Transverse colon (tissue), 4 donors: ENCODE measurements at regions of chr6 and their contacts with region 1.

Region 1: DNA sequence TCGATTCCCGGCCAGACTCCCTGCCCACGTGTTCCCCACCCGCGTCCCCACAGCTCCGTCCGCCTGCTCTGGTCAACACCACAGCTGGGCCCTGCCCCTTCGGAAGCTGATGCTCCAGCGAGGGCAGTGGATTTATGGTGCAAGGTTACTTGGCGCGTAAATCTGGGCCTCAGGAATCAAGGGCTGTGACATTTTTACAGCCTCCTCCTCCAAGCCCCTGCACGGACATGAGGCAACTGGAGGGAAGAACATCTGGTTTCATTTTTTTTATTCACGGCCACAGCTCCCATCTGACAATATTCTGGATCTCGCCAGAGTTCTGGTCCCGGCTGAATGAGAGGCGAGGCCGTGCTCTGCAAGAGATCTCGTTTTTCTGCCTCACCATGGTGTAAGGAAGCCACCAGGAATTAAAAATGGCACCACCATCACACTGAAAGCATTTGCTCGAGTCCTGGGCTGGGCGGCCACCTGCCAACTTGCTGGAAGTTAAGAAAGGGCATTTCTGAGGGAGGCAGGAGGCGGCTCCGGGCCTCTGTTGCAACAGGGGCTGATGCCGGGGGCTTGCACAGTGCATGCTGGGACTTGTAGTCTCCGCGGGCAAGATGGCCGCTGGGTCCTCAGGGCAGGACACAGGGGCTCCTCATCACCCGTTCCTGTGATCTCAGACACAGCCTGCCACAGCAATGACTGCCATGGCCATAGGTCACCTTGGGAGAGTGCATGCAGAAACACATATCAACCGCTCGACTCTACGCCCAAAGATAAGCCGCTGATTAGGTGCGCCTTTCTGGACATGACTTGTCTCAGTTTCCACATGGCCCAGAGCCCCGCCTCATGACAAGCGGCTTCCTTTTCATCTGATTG is 148.5 kb downstream of the LY86 start:
- DNase-seq: peak; percentile 37
- H3K4me3 ChIP-seq: peak overlapping the region in 3 of 4 donors; percentile 8 to 27 (median 10)
- H3K27ac ChIP-seq: peak overlapping the region; percentile 8 to 66 (median 50)
- H3K4me1 ChIP-seq: peaks cover 0 to 5% (median 0%) of the 10 kb centered on the region in 4 donors
- H3K27me3 ChIP-seq: no peaks in the 10 kb centered on the region
- CTCF ChIP-seq: no peak
- EP300 ChIP-seq: no peak
- POLR2A ChIP-seq: no peak

Region 2: GRCh38 chr6:4994741-4995140 is 1742.3 kb before region 1 on chr6:
- in situ Hi-C with region 1: no loop called
- intact Hi-C with region 1: loop called (anchors 5 kb)
- DNase-seq: no peak
- H3K4me3 ChIP-seq: no peak overlapping the region
- H3K27ac ChIP-seq: no peak overlapping the region
- H3K4me1 ChIP-seq: no peaks in the 10 kb centered on the region
- H3K27me3 ChIP-seq: no peaks in the 10 kb centered on the region
- CTCF ChIP-seq: no peak
- EP300 ChIP-seq: no peak
- POLR2A ChIP-seq: no peak

Region 3: GRCh38 chr6:6610031-6610591 is 126.9 kb before region 1 on chr6:
- in situ Hi-C with region 1: no loop called
- intact Hi-C with region 1: no loop called
- DNase-seq: peak; percentile 11
- H3K4me3 ChIP-seq: no peak overlapping the region
- H3K27ac ChIP-seq: no peak overlapping the region
- H3K4me1 ChIP-seq: no peaks in the 10 kb centered on the region
- H3K27me3 ChIP-seq: no peaks in the 10 kb centered on the region
- CTCF ChIP-seq: no peak
- EP300 ChIP-seq: no peak
- POLR2A ChIP-seq: no peak